ENCODE measurements at regions of chr7 and their contacts with region 1.

Region 1: DNA sequence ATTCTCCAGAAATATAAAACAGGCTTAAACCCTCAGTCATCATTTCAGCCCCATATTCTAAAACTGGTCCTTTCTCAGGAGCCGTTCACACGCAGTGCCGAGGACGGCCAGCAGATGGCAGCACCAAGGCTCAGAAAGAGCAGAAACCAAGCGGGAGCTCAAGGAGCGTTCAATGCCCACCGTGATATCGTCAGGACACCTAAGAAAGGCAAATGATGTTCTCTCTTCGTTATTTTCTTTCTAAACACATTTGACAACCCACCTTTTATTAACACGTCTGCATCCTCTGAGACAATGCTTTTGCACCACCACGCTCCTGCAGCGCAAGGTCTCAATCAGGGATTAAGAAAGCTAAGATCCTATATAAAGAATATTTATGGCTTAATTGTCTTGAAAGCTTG is 45.7 kb upstream of the RBM33 start:
- H3K4me3 ChIP-seq: no peak overlapping the region
- H3K27ac ChIP-seq: no peak overlapping the region
- H3K4me1 ChIP-seq: no peaks in the 10 kb centered on the region
- CTCF ChIP-seq: peak; percentile 72

Region 2: DNA sequence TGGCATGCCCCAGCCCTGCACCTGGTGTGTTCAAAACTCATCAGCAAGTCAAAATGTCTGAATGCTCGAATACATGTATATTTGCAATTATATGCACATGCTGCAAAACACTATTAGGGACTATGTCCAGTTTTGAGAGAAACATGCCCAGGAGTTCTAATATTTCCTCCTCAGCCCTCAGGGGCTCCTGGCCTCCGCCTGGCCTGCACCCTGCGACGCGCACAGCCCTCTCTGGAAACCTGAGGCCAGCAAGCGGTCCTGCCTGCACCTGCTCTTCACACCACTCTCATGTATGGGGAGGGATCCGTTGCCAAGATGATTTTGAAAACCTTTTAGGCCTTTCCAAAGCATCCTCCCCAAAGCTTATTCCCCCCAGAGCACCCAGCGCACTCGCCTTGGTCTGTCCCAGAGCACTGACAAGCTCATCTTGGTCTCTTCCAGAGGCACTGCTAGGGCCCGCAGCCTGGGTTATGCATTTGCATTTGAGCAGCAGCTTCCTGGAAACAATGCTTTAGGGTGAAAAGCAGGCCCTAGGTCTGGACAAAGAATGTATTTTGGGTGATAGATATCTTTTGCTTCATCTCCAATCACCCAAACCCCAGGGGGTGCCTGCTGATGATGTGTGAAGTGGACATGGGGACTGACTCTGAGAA is 29.8 kb before region 1 on chr7:
- CTCF ChIA-PET with region 1: interaction called, 10 read pairs
- POLR2A ChIA-PET with region 1: no interaction called
- H3K4me3 ChIP-seq: no peak overlapping the region
- H3K27ac ChIP-seq: no peak overlapping the region
- H3K4me1 ChIP-seq: no peaks in the 10 kb centered on the region
- CTCF ChIP-seq: no peak

Region 3: DNA sequence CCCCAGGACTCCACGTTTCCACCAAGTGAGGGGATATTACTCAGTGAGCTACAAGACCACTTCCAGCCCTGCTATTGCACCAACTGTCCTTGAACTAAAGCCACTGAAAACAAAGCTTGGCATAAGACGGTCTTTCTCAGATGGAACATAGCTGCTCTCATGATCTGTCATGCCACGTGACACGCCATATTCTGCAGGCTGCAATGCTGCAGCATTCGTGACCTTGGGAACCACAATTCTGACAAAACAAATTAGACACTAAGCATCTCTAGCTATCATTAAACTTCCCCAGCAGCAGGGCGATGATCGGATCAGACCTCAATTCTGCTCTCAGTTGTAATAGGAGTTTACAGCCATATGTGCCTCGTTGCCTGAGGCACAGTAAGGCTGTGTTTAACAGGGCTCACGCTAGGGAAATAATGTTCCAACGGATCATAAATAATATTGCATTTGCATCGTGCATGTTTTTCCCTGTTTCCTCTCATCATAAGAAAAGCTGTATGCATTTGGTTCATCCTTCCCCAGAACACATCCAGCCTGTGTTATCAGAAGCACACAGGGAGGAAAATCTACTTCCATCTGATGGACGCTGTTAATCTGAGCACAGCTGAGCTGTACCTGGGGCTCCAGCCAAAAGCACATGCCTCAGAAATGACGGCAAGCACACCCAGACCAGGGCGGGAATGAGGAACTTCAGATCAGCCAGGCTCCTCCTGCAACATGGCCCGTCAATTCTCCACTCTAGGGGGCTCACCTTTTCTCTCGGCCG is 13.9 kb before region 1 on chr7:
- CTCF ChIA-PET with region 1: interaction called, 32 read pairs
- POLR2A ChIA-PET with region 1: no interaction called
- H3K4me3 ChIP-seq: no peak overlapping the region
- H3K27ac ChIP-seq: no peak overlapping the region
- H3K4me1 ChIP-seq: no peaks in the 10 kb centered on the region
- CTCF ChIP-seq: no peak

Region 4: DNA sequence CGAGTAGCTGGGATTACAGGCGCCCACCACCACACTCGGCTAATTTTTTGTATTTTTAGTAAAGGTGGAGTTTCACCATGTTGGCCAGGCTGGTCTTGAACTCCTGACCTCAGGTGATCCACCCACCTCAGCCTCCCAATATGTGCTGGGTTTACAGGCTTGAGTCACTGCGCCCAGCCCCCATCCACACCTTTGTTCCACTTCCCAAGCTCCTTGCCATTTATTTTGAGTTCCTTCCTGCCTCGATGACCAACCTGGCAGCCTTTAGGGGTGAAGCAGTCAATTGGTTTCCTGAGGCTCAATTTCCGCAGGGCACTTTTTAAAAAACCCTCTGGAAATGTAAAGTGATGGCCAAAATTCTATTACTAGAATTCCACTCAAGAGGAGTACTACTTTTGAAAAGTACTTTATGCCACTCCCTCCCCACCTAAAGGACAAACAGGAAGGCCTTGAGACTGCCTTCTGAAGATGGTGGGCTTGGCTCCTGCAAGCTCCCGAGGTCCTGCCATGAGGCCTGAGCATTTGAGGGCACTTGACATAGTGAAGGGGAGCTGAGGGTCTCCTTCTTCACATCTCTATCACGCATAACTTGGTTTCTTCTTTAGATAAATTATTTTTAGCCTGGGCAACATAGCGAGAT is 13.1 kb after region 1 on chr7:
- CTCF ChIA-PET with region 1: interaction called, 29 read pairs
- POLR2A ChIA-PET with region 1: no interaction called
- H3K4me3 ChIP-seq: no peak overlapping the region
- H3K27ac ChIP-seq: no peak overlapping the region
- H3K4me1 ChIP-seq: no peaks in the 10 kb centered on the region
- CTCF ChIP-seq: no peak

Region 5: DNA sequence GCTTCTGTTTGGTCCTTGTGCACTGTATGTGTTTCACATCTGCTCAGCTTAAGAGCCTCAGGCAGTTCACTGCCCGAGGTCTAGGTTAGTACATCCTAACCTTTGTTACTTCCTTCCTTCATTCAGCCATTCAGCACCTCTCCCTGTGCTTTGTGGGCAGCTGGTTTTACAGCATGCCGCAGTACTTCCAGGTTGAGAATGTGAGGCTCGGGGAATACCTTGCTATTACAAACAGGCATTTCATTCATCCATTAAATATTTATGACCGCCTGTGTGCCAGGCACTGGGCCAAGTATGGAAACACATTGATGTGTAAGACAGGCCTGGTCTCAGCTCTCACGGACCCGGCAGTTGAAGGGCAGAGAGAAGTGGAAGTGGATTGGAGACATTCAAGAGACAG is 131.0 kb after region 1 on chr7:
- CTCF ChIA-PET with region 1: interaction called, 29 read pairs
- POLR2A ChIA-PET with region 1: no interaction called
- H3K4me3 ChIP-seq: no peak overlapping the region
- H3K27ac ChIP-seq: no peak overlapping the region
- H3K4me1 ChIP-seq: no peaks in the 10 kb centered on the region
- CTCF ChIP-seq: no peak

Region 6: GRCh38 chr7:155738652-155739537 is 140.1 kb after region 1 on chr7:
- CTCF ChIA-PET with region 1: interaction called, 29 read pairs
- POLR2A ChIA-PET with region 1: no interaction called
- H3K4me3 ChIP-seq: no peak overlapping the region
- H3K27ac ChIP-seq: no peak overlapping the region
- H3K4me1 ChIP-seq: no peaks in the 10 kb centered on the region
- CTCF ChIP-seq: peak; percentile 87

Region 7: GRCh38 chr7:155766966-155767916 is 168.4 kb after region 1 on chr7:
- CTCF ChIA-PET with region 1: interaction called, 26 read pairs
- POLR2A ChIA-PET with region 1: no interaction called
- H3K4me3 ChIP-seq: no peak overlapping the region
- H3K27ac ChIP-seq: no peak overlapping the region
- H3K4me1 ChIP-seq: no peaks in the 10 kb centered on the region
- CTCF ChIP-seq: no peak

Region 8: GRCh38 chr7:155870334-155871180 is 271.7 kb after region 1 on chr7:
- CTCF ChIA-PET with region 1: no interaction called
- POLR2A ChIA-PET with region 1: no interaction called
- H3K4me3 ChIP-seq: no peak overlapping the region
- H3K27ac ChIP-seq: no peak overlapping the region
- H3K4me1 ChIP-seq: no peaks in the 10 kb centered on the region
- CTCF ChIP-seq: no peak

Measured in HEK293 (cell line).